ENCODE measurements at regions of chr17 and their contacts with region 1.

Region 1: DNA sequence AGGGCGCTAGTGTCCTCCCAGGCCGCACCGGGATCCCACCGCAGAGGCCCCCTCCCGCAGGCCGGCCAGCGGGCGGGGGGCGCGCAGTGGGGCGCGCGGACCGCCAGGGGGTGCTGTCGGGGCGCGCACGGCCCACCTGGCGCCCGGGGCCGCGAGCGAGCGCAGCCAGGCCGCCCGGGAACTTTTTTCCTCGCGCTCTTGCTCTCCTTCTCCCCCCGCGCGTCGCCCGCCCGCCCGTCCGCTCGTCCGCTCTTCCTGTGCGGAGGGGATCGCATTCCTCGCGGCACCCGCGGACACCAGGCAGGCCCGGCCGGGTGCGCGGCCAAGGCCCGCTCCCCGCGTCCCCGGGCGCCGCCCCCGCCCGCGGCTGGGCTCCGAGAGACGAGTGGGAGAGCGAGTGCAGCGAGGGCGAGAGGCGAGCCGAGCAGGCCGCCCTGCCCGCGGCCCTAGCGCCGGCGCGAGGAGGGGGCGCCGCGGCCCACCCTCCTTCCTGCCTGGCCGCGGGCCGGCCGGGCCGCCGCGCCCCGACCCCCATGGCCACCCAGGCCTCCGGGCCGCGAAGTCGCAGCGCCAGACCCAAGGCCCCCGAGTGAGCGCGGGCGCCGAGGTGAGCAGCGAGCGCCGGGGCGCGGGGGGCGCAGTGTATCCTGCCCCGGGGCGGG is at the start of gene RAI1:
- DNase-seq: peak; percentile 86 to 93
- ATAC-seq: peak; percentile 87
- H3K4me3 ChIP-seq: peak within 1 kb of the TSS; percentile 62 to 94
- H3K27ac ChIP-seq: peak within 1 kb of the TSS; percentile 71 to 81
- H3K4me1 ChIP-seq: no peaks in the 10 kb centered on the region
- H3K27me3 ChIP-seq: no peaks in the 10 kb centered on the region
- total RNA-seq, gene RAI1: 23.9 to 35.8 TPM

Region 2: DNA sequence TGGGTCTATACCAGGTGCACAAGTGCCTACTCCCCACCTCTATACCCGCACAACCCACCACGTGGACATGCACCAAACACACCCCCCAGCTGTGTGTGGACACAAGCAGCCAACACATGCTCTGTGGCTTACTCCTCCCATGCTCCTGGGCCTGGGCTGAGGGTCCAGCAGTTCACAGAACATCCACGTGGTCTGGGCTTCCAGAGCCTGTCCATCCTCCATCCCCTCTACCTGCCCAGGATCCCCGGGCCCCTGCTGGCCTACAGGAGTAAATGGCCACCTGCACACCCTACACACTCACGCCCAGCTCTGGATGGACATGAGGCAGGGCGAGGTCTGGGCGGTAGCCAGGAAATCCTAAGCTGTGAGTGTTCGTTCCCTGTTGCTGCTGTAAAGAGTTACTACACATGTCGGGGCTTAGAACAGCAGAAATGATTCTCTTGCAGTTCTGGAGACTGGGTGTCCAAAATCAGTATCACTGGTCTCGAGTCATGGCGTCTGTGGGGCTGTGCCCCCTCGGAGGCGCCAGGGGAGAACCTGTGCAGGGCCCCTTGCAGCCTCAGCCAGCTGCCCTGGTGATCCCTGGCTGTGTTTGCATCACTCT is 15.1 kb before region 1 on chr17:
- intact Hi-C with region 1: no loop called
- DNase-seq: no peak
- ATAC-seq: no peak
- H3K4me3 ChIP-seq: no peak overlapping the region
- H3K27ac ChIP-seq: no peak overlapping the region
- H3K4me1 ChIP-seq: no peaks in the 10 kb centered on the region
- H3K27me3 ChIP-seq: no peaks in the 10 kb centered on the region

Region 3: DNA sequence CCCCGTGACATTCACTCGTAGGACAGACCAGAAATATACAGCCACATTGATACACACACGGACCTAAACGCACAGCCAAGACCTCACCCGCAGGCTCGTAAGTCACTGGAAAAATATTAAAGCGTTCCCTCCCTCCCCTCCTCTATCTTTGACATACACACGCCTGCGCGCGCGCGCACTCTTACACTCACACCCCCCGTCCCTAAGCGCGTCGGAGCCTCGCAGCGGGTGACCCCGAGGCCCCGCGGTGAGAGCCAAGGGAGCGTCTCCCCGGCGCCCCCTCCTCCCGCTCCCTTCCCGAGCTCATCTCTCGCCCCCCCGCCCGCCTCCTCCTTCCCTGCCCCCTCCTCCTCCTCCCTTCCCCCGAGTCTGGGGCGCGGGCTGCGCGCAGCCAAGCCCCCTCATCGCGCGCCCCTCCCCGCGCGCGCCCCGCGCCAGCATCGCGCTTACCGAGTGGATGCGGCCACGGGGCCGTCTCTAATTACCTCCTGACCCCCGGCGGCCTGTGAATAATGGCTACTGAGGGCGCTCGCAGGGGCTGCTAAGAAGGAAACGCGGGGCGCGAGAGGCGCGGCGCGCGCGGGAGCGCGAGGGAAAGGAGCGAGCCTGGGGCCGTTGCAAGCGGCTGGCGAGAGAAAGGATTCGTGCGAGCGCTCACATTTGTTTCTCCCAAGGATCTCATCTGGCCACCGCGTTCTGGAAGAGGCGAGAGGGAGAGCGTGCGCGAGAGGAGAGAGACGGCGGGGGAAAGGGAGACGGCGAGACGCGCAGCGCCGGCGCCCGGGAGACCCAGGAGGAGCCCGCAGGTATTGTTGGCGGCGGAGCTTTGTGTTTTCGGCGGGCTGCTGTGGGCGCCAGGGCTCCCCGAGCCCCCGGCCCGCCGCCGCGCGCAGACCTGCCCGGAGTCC is 42.3 kb after region 1 on chr17:
- intact Hi-C with region 1: loop called in 1 of 2 experiments (anchors 5 kb)
- DNase-seq: no peak
- ATAC-seq: no peak
- H3K4me3 ChIP-seq: peak overlapping the region; percentile 11 to 60
- H3K27ac ChIP-seq: no peak overlapping the region
- H3K4me1 ChIP-seq: peaks cover 0 to 3% of the 10 kb centered on the region in 2 donors
- H3K27me3 ChIP-seq: no peaks in the 10 kb centered on the region

Region 4: DNA sequence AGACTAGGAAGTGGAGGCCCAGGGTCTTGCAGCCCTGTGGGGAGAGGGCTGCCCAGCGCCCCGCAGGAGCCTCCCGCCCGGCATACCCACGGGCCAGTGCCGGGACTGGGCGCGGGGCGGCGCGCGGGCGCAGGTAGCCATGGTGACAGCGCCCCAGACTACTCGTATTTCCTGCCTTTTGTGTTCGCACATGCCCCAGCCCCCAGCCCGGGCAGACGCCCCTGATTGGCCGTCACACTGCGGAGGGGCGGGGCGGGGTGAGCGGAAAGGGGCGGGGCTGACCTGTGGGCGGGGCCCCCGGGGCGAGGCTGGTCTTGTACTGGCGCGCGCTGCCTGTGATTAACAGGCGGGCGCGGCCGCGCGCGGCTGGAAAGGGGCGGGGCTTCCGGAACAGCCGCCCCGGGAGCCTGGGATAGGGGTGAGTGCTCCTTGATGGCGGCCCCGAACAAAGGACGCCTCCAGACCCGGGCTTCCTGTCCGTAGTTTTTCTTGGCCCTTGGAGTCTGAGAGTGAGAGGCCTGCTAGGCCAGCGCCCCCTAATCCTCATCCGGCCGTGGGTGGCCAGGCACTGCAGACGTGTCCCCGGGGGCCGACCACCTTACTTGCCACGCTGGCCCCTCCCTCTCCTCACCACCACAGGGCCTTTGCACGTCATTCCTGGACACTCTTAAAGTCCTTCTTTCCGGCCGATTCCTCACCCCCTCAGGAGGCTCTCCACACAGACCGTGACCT is 70.9 kb after region 1 on chr17:
- intact Hi-C with region 1: loop called in 1 of 2 experiments (anchors 2 kb)
- DNase-seq: peak; percentile 97 to 99
- ATAC-seq: peak; percentile 98
- H3K4me3 ChIP-seq: peak overlapping the region; percentile 35 to 44
- H3K27ac ChIP-seq: peak overlapping the region in 1 of 2 donors; percentile 16
- H3K4me1 ChIP-seq: no peaks in the 10 kb centered on the region
- H3K27me3 ChIP-seq: no peaks in the 10 kb centered on the region

Region 5: DNA sequence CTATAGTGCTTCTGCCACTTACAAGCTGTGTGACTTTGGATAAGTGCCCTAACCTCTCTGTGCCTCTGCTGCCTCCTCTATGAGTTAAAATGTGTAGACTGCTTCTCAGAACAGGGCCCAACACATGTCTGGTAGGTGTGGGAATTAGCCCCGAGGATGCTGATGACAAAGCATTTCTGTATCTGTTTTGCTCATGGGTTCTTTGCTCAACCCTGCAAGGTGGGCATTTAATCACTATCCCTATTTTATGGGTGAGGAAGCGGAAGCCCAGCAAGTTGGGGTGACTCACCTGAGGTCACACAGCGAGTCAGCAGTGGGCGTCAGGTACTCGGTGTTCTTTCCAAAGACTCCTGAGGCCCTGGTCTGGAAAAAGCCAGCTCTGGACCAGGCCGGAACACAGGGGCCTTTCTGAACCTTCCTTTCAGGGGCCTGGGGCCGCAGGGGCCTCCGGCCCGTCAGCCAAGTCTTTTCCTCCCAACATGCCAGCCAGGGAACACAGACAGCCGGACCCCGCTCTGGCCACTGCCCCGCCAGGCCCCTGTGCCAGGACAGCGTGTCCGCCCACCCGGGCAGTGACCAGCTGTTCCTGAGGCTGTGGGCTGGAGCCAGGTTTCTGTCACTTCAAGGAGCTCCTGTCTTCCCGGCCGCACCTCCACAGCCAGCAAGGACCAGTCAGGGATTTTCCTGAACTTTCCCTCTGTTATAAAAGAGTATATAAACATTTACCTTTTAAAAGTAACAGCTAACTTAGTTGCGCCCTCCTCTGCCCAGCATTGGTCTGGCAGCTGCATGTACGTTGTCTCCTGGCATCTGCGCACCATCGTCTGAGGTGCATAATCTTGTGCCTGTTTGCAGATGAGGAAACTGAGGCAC is 92.9 kb after region 1 on chr17:
- intact Hi-C with region 1: loop called (anchors 1 to 5 kb)
- DNase-seq: peak in 1 of 2 donors; percentile 62
- ATAC-seq: no peak
- H3K4me3 ChIP-seq: no peak overlapping the region
- H3K27ac ChIP-seq: peak overlapping the region in 1 of 2 donors; percentile 28
- H3K4me1 ChIP-seq: no peaks in the 10 kb centered on the region
- H3K27me3 ChIP-seq: no peaks in the 10 kb centered on the region

Region 6: GRCh38 chr17:17859909-17860765 is 178.8 kb after region 1 on chr17:
- intact Hi-C with region 1: loop called (anchors 2 to 5 kb)
- DNase-seq: peak in 1 of 2 donors; percentile 89
- ATAC-seq: peak; percentile 90
- H3K4me3 ChIP-seq: no peak overlapping the region
- H3K27ac ChIP-seq: no peak overlapping the region
- H3K4me1 ChIP-seq: no peaks in the 10 kb centered on the region
- H3K27me3 ChIP-seq: no peaks in the 10 kb centered on the region

Region 7: GRCh38 chr17:17919169-17920107 is 238.1 kb after region 1 on chr17:
- intact Hi-C with region 1: loop called in 1 of 2 experiments (anchors 10 kb)
- DNase-seq: peak; percentile 78 to 83
- ATAC-seq: peak; percentile 77
- H3K4me3 ChIP-seq: no peak overlapping the region
- H3K27ac ChIP-seq: no peak overlapping the region
- H3K4me1 ChIP-seq: peaks cover 2 to 3% of the 10 kb centered on the region in 2 donors
- H3K27me3 ChIP-seq: no peaks in the 10 kb centered on the region

Region 8: DNA sequence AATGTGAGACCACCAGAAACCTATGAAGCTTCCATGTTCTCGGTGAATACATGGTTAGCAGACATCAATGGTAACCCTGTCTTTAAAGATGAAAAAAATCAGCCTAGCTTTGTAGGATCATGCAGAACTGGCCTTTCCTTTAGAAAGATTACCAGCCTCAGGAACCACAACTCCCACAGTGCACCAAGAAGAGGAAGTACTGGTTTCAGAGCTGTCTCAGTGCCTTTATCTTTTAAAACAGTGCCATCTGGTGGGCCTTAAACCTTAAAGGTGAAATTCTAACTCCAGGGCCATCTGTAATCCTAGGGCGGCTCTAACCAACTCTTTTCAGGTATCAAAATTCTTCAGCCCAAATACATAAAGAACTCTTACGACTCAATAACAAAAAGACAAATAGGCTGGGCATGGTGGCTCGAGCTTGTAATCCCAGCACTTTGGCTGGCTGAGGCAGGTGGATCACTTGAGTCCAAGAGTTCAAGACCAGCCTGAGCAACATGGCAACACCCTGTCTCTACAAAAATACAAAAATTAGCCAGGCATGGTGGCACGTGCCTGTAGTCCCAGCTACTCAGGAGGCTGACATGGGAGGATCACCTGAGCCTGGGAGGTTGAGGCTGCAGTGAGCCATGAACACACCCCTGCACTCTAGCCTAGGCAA is 352.3 kb after region 1 on chr17:
- intact Hi-C with region 1: loop called (anchors 1 to 5 kb)
- DNase-seq: no peak
- ATAC-seq: peak; percentile 91
- H3K4me3 ChIP-seq: no peak overlapping the region
- H3K27ac ChIP-seq: no peak overlapping the region
- H3K4me1 ChIP-seq: no peaks in the 10 kb centered on the region
- H3K27me3 ChIP-seq: no peaks in the 10 kb centered on the region